HCT116 (cell line): ENCODE measurements at regions of chr9 and their contacts with region 1.

Region 1: GRCh38 chr9:133726401-133727276 is 11.5 kb downstream of the SARDH start:
- DNase-seq: peak; percentile 38
- ATAC-seq: peak; percentile 87
- H3K4me3 ChIP-seq: no peak overlapping the region
- H3K27ac ChIP-seq: no peak overlapping the region
- H3K4me1 ChIP-seq: peaks cover 0 to 5% of the 10 kb centered on the region in 2 experiments; a peak in 2 of 4 replicates
- H3K27me3 ChIP-seq: 0 out of 2 replicates have a peak, but pooled peaks cover 12% of the 10 kb centered on the region
- CTCF ChIP-seq: peak; percentile 61 to 76 (median 74)
- POLR2A ChIP-seq: no peak
- RAD21 ChIP-seq: peak; percentile 86

Region 2: GRCh38 chr9:133406480-133407307 is 319.9 kb before region 1 on chr9:
- CTCF ChIA-PET with region 1: no interaction called
- POLR2A ChIA-PET with region 1: no interaction called
- RAD21 ChIA-PET with region 1: no interaction called
- intact Hi-C with region 1: loop called (anchors 2 kb)
- DNase-seq: peak; percentile 47
- ATAC-seq: peak; percentile 85
- H3K4me3 ChIP-seq: no peak overlapping the region
- H3K27ac ChIP-seq: no peak overlapping the region
- H3K4me1 ChIP-seq: peaks cover 0 to 5% of the 10 kb centered on the region in 2 experiments; a peak in 1 of 4 replicates
- H3K27me3 ChIP-seq: no peaks in the 10 kb centered on the region
- CTCF ChIP-seq: peak; percentile 81 to 96 (median 93)
- POLR2A ChIP-seq: no peak
- RAD21 ChIP-seq: peak; percentile 67

Region 3: DNA sequence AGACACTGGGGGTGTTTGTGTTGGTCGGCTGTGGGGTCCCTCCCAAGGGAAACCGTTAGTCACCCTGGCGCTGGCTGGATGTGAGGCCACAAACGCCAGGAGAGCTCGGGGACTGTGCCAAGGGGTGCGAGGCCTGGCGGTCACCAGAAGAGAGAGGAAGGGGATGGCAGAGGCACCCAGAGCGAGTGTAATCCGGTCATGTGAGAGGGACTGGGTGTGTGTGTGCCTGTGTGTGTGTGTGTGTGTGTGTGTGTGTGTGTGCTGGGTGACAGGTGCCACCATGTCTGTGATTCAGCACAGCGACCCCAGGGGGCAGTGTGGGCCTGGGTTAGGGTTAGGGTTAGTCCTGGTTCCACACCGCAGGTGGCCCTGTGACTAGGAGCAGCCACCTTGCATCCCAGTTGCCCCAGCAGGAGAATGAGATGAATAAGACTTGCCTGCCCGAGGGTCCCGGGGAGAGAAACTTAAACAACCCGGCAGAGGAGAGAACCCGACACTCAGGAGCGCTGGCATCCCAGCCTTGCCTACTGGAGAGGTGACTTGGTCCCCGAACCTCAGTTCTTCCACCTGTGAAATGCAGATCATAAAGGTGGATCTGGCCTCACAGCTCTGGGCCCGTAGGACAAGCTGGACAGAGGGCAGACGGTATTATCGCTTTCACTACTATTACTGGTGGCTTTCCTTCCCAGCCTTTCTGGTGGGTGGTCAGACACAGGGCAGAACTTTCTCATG is 193.5 kb before region 1 on chr9:
- CTCF ChIA-PET with region 1: interaction called, 14 read pairs
- POLR2A ChIA-PET with region 1: no interaction called
- RAD21 ChIA-PET with region 1: no interaction called
- intact Hi-C with region 1: loop called (anchors 1 kb)
- DNase-seq: peak; percentile 73
- ATAC-seq: peak; percentile 92
- H3K4me3 ChIP-seq: no peak overlapping the region
- H3K27ac ChIP-seq: no peak overlapping the region
- H3K4me1 ChIP-seq: no peaks in the 10 kb centered on the region; a peak in 1 of 4 replicates
- H3K27me3 ChIP-seq: no peaks in the 10 kb centered on the region
- CTCF ChIP-seq: peak; percentile 77 to 91 (median 79)
- POLR2A ChIP-seq: no peak
- RAD21 ChIP-seq: peak; percentile 91

Region 4: GRCh38 chr9:133742849-133743444 is 16.3 kb after region 1 on chr9:
- CTCF ChIA-PET with region 1: interaction called, 11 read pairs
- POLR2A ChIA-PET with region 1: no interaction called
- RAD21 ChIA-PET with region 1: interaction called in 1 of 2 experiments, 3 read pairs
- intact Hi-C with region 1: no loop called
- DNase-seq: peak; percentile 77
- ATAC-seq: peak; percentile 92
- H3K4me3 ChIP-seq: no peak overlapping the region
- H3K27ac ChIP-seq: no peak overlapping the region
- H3K4me1 ChIP-seq: peaks cover 5 to 8% of the 10 kb centered on the region in 2 experiments; a peak in 3 of 4 replicates
- H3K27me3 ChIP-seq: 0 out of 2 replicates have a peak, but pooled peaks cover 10% of the 10 kb centered on the region
- CTCF ChIP-seq: peak; percentile 99
- POLR2A ChIP-seq: no peak
- RAD21 ChIP-seq: peak; percentile 83